Mammary epithelial cell (primary cell): ENCODE measurements at regions of chr10 and their contacts with region 1.

Region 1: DNA sequence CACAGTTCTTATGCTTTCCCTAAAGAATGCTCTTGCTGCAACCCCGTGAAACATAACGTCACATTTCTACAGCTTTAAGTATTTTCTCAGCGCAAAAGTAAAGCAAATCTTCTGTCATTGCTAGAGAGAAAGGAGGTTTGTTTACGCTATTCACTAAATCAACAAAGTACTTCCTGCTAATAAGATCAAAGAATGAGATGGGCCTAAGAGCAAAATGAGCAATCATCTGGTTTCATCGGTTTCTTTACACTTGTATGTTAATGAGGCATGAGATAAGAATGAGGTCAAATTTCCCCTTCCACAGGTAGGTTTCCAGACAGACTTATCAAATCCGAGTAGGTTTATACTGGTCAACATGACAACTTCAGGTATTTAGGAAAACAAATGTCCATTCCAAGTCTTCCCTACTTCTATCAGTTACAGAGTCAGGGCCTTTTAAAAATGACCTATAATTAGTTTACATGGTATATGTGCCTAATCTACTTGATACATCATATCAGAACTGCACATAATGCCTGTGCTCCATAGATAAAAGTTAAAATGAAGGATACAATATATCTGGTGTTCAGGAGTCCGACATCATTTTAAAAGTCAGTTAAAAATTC is 8.4 kb downstream of the USP6NL start:
- DNase-seq: peak; percentile 19
- H3K4me3 ChIP-seq: no peak overlapping the region
- H3K27ac ChIP-seq: no peak overlapping the region
- H3K4me1 ChIP-seq: no peaks in the 10 kb centered on the region
- H3K27me3 ChIP-seq: no peaks in the 10 kb centered on the region
- CTCF ChIP-seq: no peak

Region 2: DNA sequence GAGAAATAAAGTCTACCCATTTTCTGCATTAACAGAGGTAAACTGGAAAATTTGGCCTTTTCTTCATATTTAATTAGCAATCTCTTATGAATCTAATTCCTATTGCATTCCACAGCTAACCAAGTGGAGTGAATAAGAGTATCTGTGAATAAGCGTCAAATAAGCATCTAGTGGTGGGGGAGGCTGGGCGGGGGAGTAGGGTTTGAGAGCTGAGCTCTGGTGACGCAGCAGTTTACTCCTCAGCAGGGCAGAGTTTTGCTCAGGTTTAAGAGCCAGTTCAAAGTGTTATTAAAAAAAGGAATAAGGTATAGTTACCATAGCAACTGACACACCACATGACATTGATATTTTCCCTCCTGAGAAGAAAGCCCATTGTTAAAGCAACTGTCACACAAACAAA is 1932.1 kb before region 1 on chr10:
- CTCF ChIA-PET with region 1: no interaction called
- dilution Hi-C with region 1: no loop called
- in situ Hi-C with region 1: no loop called
- intact Hi-C with region 1: no loop called
- DNase-seq: no peak
- H3K4me3 ChIP-seq: no peak overlapping the region
- H3K27ac ChIP-seq: no peak overlapping the region
- H3K4me1 ChIP-seq: no peaks in the 10 kb centered on the region
- H3K27me3 ChIP-seq: no peaks in the 10 kb centered on the region
- CTCF ChIP-seq: no peak

Region 3: GRCh38 chr10:11533328-11533781 is 69.7 kb before region 1 on chr10:
- CTCF ChIA-PET with region 1: no interaction called
- dilution Hi-C with region 1: loop called (anchors 5 kb)
- in situ Hi-C with region 1: no loop called
- intact Hi-C with region 1: no loop called
- DNase-seq: peak; percentile 38
- H3K4me3 ChIP-seq: no peak overlapping the region
- H3K27ac ChIP-seq: peak overlapping the region; percentile 56
- H3K4me1 ChIP-seq: peaks cover 21% of the 10 kb centered on the region
- H3K27me3 ChIP-seq: no peaks in the 10 kb centered on the region
- CTCF ChIP-seq: peak; percentile 45 to 55

Region 4: DNA sequence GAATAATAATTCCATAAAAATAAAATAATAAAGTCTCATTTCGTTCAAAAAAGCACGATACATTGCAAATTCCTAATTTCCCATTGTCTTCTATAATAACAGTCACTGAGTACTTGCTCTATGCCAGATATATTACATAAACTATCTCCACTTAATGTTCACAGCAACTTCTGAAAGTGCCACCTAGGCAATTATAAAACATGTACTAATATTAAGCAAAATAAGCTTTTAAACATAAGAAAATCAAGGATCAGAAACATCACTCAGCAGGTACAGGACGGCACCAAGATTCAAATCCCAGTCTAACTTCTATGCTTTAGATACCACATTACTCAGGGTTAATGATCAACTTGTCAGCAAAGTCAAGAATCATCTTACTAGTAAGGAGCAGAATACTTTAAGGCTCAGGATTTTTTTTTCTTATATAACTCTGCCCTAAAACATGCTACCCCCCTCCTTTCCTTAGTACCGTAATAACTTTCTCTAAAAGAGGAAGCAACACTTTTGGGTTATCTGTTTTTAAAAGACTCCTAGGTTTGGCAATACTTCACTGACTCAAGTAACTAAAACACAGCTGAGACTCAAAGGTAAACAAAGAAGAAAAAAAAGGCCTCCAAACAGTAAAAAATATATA is 42.8 kb before region 1 on chr10:
- CTCF ChIA-PET with region 1: no interaction called
- dilution Hi-C with region 1: loop called (anchors 5 kb)
- in situ Hi-C with region 1: no loop called
- intact Hi-C with region 1: no loop called
- DNase-seq: no peak
- H3K4me3 ChIP-seq: no peak overlapping the region
- H3K27ac ChIP-seq: no peak overlapping the region
- H3K4me1 ChIP-seq: no peaks in the 10 kb centered on the region
- H3K27me3 ChIP-seq: no peaks in the 10 kb centered on the region
- CTCF ChIP-seq: no peak

Region 5: GRCh38 chr10:11698691-11699549 is 95.9 kb after region 1 on chr10:
- CTCF ChIA-PET with region 1: no interaction called
- dilution Hi-C with region 1: no loop called
- in situ Hi-C with region 1: no loop called
- intact Hi-C with region 1: no loop called
- DNase-seq: no peak
- H3K4me3 ChIP-seq: no peak overlapping the region
- H3K27ac ChIP-seq: no peak overlapping the region
- H3K4me1 ChIP-seq: no peaks in the 10 kb centered on the region
- H3K27me3 ChIP-seq: no peaks in the 10 kb centered on the region
- CTCF ChIP-seq: no peak